Activated CD8-positive, alpha-beta T cell treated with anti-CD3 and anti-CD28 coated beads for 36 hours (primary cell): ENCODE measurements at regions of chr4 and their contacts with region 1.

Region 1: DNA sequence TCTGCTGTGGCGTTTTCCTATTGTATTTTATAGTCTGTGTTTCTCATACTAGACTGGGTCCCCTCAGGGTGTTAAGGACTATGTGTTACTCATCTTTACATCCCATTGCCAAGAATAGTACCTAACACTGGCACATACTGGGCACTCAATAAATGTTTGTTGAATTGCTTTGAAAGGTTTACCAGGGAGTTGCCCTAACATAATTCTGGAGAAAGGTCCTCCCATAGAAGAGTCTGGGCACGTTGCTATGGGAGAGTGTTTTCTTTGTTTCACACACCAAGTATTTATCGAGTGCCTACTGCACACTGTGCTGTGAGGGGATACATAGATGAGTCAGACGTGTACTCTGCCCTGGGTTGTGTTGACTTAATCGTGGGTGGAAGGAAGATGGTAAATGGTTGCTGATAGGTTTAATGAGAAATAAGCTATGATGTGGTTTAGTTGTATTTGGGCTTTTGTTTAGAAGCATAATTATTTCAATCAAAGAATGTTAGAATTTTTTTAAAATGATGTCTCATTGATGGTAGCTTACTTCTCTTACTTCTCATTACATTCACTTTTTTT is 42.9 kb downstream of the AFF1 start:
- DNase-seq: peak; percentile 50
- ATAC-seq: peak; percentile 86
- H3K4me3 Mint-ChIP-seq: no peak overlapping the region
- H3K27ac Mint-ChIP-seq: peak overlapping the region; percentile 75
- H3K4me1 Mint-ChIP-seq: peaks cover 62% of the 10 kb centered on the region
- H3K27me3 Mint-ChIP-seq: no peaks in the 10 kb centered on the region
- CTCF ChIP-seq: no peak

Region 2: GRCh38 chr4:86564795-86565194 is 412.9 kb before region 1 on chr4:
- CTCF ChIA-PET with region 1: no interaction called
- POLR2A ChIA-PET with region 1: no interaction called
- intact Hi-C with region 1: no loop called
- DNase-seq: no peak
- ATAC-seq: no peak
- H3K4me3 Mint-ChIP-seq: no peak overlapping the region
- H3K27ac Mint-ChIP-seq: no peak overlapping the region
- H3K4me1 Mint-ChIP-seq: no peaks in the 10 kb centered on the region
- H3K27me3 Mint-ChIP-seq: peaks cover 2% of the 10 kb centered on the region
- CTCF ChIP-seq: no peak

Region 3: DNA sequence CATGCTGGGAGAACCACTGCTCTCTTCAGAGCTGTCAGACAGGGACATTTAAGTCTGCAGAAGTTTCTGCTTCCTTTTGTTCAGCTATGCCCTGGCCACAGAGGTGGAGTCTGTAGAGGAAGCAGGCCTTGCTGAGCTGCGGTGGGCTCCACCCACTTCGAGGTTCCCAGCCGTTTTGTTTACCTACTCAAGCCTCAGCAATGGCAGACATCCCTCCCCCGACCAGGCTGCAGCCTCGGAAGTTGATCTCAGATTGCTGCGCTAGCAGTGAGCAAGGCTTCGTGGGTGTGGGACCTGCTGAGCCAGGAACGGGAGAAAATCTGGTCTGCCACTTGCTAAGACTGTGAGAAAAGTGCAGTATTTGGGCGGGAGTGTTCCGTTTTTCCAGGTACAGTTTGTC is 247.4 kb before region 1 on chr4:
- CTCF ChIA-PET with region 1: no interaction called
- POLR2A ChIA-PET with region 1: no interaction called
- intact Hi-C with region 1: no loop called
- DNase-seq: no peak
- ATAC-seq: no peak
- H3K4me3 Mint-ChIP-seq: no peak overlapping the region
- H3K27ac Mint-ChIP-seq: no peak overlapping the region
- H3K4me1 Mint-ChIP-seq: no peaks in the 10 kb centered on the region
- H3K27me3 Mint-ChIP-seq: no peaks in the 10 kb centered on the region
- CTCF ChIP-seq: no peak

Region 4: GRCh38 chr4:86934771-86935565 is 42.7 kb before region 1 on chr4 and contains the start of gene AFF1:
- CTCF ChIA-PET with region 1: interaction called, 4 read pairs
- POLR2A ChIA-PET with region 1: interaction called, 4 read pairs
- intact Hi-C with region 1: loop called (anchors 5 kb)
- DNase-seq: peak; percentile 92
- ATAC-seq: peak; percentile 83
- H3K4me3 Mint-ChIP-seq: peak within 1 kb of the TSS; percentile 90
- H3K27ac Mint-ChIP-seq: peak within 1 kb of the TSS; percentile 95
- H3K4me1 Mint-ChIP-seq: peaks cover 43% of the 10 kb centered on the region
- H3K27me3 Mint-ChIP-seq: no peaks in the 10 kb centered on the region
- CTCF ChIP-seq: peak; percentile 38
- total RNA-seq, gene AFF1: 40.3 to 45.4 TPM

Region 5: DNA sequence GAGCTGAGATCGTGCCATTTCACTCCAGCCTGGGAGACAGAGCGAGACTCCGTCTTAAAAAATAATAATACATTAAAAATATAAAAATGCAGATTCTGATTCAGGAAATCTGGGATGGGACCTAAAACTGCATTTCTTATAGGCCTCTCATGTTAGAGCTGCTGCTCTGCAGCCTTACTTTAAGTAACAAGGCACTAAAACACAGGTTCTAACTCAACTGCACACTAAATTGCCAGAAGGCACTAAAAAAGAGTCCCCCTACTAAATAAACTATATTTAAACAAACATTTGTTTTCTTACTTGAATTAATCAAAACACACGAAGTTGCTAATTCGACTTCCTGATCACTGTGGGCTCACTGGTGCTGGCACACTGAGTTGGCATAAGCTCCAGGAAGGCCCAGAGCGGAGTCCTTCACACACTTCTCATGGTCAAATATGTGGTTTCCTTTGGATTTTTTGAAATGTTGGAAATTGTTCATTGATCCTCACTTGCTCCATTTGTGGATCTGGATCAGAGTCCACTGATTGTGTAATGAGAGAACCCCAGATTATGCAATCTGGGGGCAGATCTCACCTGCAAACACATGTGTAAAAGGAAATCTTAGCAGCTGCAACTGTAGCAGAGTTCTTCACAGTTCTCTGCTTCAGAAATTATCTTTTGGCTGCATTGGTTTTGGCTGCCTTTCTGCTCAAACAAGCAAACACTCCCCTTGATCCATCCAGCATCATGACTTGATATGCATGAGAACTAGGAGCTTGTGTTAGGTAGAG is 16.4 kb after region 1 on chr4:
- CTCF ChIA-PET with region 1: no interaction called
- POLR2A ChIA-PET with region 1: no interaction called
- intact Hi-C with region 1: no loop called
- DNase-seq: no peak
- ATAC-seq: no peak
- H3K4me3 Mint-ChIP-seq: no peak overlapping the region
- H3K27ac Mint-ChIP-seq: no peak overlapping the region
- H3K4me1 Mint-ChIP-seq: peaks cover 9% of the 10 kb centered on the region
- H3K27me3 Mint-ChIP-seq: no peaks in the 10 kb centered on the region
- CTCF ChIP-seq: no peak

Region 6: DNA sequence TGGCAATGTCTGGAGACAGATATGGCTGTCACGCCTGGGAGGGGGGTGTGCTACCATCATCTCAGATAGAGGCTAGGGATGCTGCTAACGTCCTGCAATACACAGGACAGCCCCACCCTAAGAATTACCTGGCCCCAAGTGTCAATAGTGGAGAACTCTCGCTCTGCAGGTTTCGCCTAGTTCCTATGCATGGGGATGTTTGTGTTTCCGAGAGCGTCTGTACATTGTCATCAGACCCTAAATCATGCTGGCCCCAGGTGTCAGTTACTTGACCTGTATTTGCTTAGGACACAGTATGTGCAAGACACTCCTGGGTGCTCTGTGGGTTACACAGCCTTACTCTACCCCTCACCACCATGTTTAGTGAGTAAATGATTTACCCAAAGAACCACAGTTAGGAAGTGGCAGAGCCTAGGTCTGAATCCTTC is 47.9 kb after region 1 on chr4:
- CTCF ChIA-PET with region 1: no interaction called
- POLR2A ChIA-PET with region 1: no interaction called
- intact Hi-C with region 1: no loop called
- DNase-seq: no peak
- ATAC-seq: no peak
- H3K4me3 Mint-ChIP-seq: no peak overlapping the region
- H3K27ac Mint-ChIP-seq: no peak overlapping the region
- H3K4me1 Mint-ChIP-seq: peaks cover 56% of the 10 kb centered on the region
- H3K27me3 Mint-ChIP-seq: no peaks in the 10 kb centered on the region
- CTCF ChIP-seq: no peak